Aorta (tissue), 5 donors: ENCODE measurements at regions of chr12 and their contacts with region 1.

Region 1: DNA sequence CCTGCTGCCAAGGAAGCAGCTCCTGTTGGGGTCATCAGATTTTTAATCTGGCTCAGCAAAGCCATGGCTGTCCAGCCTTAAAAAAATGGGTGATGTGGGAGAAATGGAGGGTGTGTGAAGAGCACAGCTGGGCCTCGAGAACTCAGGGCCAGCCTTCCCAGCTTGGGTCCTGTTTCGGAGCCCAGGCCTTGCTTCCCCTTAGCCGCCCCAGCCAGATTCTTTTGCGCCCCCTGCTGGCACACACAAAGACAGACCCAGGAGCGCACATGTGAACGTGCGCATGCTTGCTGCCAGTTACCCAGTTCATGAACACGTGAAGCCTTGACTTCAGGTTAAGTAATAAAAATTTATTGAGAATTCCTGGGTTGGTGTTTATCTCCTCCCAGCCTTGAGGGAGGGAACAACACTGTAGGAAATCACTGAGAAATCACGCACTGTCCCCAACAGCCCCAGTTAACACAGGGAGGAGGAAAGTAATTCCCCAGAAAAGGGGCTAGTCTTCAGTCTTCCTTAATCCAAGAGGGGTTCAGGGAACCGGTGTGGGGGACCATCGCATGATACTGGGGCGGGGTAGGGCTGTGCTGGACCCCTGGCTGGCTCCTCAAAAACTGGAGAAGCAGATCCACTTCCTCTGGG is 5.3 kb downstream of the PHB2 start:
- DNase-seq: peak; percentile 94
- ATAC-seq: peak; percentile 84
- H3K4me3 ChIP-seq: no peak overlapping the region
- H3K27ac ChIP-seq: peak overlapping the region in 1 of 2 donors; percentile 41
- H3K4me1 ChIP-seq: peaks cover 4 to 5% of the 10 kb centered on the region in 2 donors
- H3K27me3 ChIP-seq: no peaks in the 10 kb centered on the region

Region 2: DNA sequence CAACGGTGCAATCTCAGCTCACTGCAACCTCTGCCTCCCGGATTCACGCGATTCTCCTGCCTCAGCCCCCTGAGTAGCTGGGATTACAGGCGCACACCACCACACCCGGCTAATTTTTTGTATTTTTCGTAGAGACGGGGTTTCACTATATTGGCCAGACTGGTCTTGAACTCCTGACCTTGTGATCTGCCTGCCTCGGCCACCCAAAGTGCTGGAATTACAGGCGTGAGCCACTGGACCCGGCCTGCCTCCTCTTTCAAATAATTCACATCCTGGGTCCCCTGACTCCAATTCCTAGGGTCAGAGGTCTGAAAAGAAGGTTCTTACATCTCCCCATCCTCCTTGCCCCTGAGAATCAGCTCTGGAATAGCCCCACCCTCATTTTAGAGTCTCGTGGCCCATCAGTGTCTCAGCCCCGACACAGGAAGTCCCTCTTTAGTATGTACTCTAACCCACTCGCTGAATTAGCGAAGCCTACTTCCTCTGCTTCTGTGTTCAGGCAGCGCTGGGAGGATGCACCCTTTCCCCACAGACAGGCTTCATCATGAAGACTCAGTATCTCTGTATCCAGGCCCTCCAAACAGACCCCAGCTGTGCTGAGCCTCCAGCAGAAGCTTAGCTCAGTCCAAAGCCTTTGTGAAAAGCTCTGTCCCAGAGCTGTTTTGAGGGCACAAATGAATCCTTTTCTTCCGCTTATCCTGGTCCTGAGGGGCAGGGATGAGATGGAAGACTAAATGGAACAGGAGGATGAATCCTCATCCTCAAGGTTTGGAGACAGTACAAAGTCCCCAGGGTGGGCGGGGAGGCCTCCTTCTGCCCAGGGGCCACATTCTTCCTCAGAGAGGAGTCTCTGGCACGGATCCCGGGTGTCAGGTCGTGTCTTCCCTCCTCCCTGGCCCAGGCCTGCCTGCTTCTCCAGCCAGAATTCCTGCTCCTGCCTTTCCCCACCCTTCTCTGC is 332.8 kb before region 1 on chr12:
- intact Hi-C with region 1: no loop called
- DNase-seq: peak in 1 of 2 donors; percentile 56
- ATAC-seq: no peak
- H3K4me3 ChIP-seq: no peak overlapping the region
- H3K27ac ChIP-seq: no peak overlapping the region
- H3K4me1 ChIP-seq: no peaks in the 10 kb centered on the region
- H3K27me3 ChIP-seq: no peaks in the 10 kb centered on the region

Region 3: DNA sequence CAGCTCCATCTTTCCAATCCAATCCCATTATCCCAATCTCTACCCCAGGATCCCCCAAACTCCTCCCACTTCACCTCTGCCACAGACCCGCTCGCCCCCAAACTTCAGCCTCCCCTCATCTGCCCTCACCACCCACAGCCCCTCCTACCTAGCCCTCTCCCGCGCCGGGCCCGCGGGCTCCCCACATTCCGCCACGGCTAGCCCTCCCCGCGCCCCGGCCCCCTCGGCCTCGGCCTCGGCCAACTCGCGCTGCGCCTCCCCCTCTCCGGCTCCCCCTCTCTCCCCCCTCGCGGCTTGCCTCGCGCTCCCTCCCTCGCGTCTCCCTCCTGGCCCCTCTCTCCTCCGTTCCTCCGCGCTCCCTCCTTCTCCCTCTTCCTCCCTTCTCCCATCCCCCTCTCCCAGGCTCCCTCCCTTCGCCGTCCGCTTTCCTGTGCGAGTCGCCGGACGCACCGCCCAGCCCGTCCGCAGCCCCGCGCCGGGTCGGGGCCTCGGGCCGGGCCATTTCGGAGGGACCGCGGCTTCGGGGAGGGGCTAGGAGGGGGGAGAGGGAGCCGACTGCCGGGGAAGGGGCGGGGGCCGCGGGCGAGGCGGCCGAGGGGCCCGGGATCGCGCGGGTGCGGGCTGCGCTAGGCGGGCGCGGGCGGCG is 37.6 kb before region 1 on chr12 and contains the start of gene ATN1:
- intact Hi-C with region 1: loop called (anchors 2 kb)
- DNase-seq: peak; percentile 93 to 95
- ATAC-seq: peak; percentile 71
- H3K4me3 ChIP-seq: peak within 1 kb of the TSS; percentile 97 to 99
- H3K27ac ChIP-seq: peak within 1 kb of the TSS; percentile 96
- H3K4me1 ChIP-seq: no peaks in the 10 kb centered on the region
- H3K27me3 ChIP-seq: no peaks in the 10 kb centered on the region
- total RNA-seq, gene ATN1: 138 to 146 TPM

Region 4: DNA sequence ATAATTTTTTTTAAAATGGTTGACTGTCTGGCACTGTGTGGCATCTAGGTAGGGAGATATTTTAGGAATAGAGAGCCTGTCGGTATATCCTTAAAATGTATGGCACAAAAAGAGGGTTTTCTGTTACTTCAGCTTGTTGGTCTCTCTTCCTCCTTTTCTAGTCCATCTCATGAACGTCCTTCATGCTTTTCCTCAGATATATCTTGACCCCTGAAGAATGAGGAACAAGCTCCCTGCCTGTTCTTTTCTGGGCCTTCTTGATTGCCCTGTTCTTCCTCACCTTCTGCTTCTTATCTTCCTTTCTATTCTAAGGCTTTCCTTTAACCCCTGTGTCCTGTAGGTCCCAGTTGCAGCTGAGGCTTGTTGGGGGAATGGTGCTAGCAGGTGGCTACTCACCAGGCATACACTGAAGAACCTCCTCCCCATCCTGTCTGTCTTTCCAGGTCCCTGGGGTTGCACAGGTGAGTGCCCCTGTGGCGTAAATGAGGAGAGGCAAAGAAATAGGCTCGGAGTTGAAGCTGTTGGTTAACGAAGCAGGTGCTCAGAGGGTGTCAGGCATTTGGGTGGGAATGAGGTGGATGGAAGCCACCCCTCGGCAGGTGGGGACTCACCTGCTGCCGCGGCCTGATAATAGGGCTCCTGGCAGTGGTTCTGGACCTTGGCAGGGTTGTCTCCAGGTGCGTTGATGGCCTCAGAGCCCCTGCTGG is 134.3 kb after region 1 on chr12:
- intact Hi-C with region 1: loop called in 1 of 2 experiments (anchors 5 kb)
- DNase-seq: no peak
- ATAC-seq: no peak
- H3K4me3 ChIP-seq: no peak overlapping the region
- H3K27ac ChIP-seq: no peak overlapping the region
- H3K4me1 ChIP-seq: no peaks in the 10 kb centered on the region
- H3K27me3 ChIP-seq: no peaks in the 10 kb centered on the region